ENCODE measurements at regions of chr11 and their contacts with region 1.

Region 1: GRCh38 chr11:78338138-78338537 is 79.5 kb downstream of the GAB2 start:
- DNase-seq: no peak
- ATAC-seq: peak in 1 of 2 donors; percentile 23
- H3K4me3 ChIP-seq: no peak overlapping the region
- H3K27ac ChIP-seq: no peak overlapping the region
- H3K4me1 ChIP-seq: no peaks in the 10 kb centered on the region
- H3K27me3 ChIP-seq: no peaks in the 10 kb centered on the region

Region 2: DNA sequence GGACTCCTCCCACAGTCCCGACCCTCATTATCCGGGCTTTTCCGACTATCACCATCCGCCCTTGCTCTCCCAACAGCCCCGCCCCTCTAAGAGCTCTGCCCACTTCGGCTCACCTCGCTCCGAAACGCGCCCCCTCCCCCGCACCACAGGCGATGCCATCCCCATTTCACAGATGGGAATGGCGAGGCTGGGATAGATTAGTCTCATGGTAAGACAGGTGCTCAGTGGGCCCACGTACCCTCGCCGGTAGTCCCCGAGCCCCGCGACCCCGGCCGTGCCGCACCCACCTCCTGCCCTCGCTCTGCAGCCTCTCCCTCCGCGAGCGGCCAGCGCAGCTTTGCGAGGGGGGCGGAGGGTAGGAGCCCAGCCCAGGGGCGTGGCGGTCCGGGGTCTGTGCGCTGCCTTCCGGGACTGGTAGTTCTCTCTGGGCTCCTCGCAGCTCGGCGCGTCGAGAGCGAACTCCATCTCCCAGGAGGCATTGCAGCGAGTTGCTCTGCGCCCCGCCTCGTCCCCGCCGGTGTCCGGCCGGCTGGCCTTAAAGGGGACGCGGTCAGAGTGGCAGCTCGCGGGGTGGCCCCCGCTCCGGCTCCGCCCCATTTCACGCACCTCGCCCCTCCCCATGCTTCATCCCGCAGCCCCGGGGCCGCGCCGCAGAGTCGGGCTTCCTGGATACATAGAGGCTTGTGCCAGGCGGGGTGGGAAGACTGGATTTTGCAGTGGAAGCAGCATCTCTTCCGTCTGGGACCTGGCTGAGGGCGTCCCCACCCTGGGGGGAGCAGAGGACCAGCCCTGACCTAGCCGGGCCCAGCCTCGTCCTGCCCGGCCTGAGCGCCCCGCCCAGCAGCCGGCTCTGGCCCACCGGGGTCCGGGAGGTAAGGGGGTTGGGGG is 149.6 kb before region 1 on chr11 and contains the starts of genes KCTD21 and USP35:
- intact Hi-C with region 1: no loop called
- DNase-seq: peak; percentile 98 to 99 (median 99)
- ATAC-seq: peak; percentile 97 to 98
- H3K4me3 ChIP-seq: peak within 1 kb of the TSS; percentile 84
- H3K27ac ChIP-seq: peak within 1 kb of the TSS; percentile 90
- H3K4me1 ChIP-seq: peaks cover 9% of the 10 kb centered on the region
- H3K27me3 ChIP-seq: no peaks in the 10 kb centered on the region
- total RNA-seq, gene KCTD21: 8.4 to 10.7 (median 10.2) TPM
- total RNA-seq, gene USP35: 10.5 to 16.6 (median 12.1) TPM

Region 3: DNA sequence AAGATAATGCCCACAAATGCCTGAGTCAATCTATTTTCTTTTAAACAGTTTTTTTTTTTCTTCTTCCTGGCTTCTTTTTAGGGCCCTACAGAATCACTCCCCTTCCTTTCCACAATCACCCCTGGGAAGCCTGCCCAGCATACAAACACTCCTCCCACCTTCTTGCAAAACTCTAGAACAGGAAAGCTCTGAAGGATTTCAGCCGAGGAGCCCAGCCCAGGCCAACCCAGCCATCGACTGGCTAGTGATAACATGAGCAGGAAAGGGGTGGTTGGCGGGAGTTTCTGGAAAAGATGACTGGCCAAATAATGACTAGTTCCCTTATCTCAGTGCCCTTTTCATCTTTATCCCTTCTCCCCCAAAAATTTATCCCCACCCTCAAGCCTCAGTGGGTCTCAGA is 81.2 kb before region 1 on chr11:
- intact Hi-C with region 1: loop called in 1 of 4 experiments (anchors 10 kb)
- DNase-seq: peak; percentile 93 to 96 (median 96)
- ATAC-seq: peak; percentile 96 to 99
- H3K4me3 ChIP-seq: no peak overlapping the region
- H3K27ac ChIP-seq: peak overlapping the region; percentile 95
- H3K4me1 ChIP-seq: peaks cover 20% of the 10 kb centered on the region
- H3K27me3 ChIP-seq: no peaks in the 10 kb centered on the region

Region 4: GRCh38 chr11:78965432-78965831 is 627.3 kb after region 1 on chr11:
- intact Hi-C with region 1: no loop called
- DNase-seq: no peak
- ATAC-seq: no peak
- H3K4me3 ChIP-seq: no peak overlapping the region
- H3K27ac ChIP-seq: no peak overlapping the region
- H3K4me1 ChIP-seq: no peaks in the 10 kb centered on the region
- H3K27me3 ChIP-seq: no peaks in the 10 kb centered on the region

Measured in right cardiac atrium (tissue), 5 donors.